ENCODE measurements at regions of chr18 and their contacts with region 1.

Region 1: DNA sequence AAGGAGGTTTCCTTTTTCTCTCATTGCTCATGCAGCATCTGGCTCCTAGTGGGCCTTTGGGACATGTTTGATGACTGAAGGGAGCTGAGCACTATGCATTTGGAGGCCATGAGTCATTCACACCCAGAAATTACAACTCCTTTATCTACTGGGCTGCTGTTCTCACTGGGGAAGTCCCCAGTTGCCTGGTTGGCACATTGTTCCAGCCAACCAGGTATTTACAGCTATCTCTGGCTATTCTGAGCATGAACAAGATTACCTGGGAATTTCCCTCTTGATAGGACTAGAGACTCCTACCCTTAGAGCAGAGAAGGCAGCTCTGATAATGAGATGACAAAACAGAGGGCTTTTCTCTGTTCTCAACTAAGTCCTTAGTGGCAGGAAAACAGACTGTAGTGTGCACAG is 206.5 kb downstream of the SETBP1 start:
- DNase-seq: peak; percentile 76
- H3K4me3 Mint-ChIP-seq: no peak overlapping the region
- H3K27ac Mint-ChIP-seq: peak overlapping the region; percentile 78
- H3K4me1 Mint-ChIP-seq: peaks cover 17% of the 10 kb centered on the region
- H3K27me3 Mint-ChIP-seq: peaks cover 7% of the 10 kb centered on the region

Region 2: DNA sequence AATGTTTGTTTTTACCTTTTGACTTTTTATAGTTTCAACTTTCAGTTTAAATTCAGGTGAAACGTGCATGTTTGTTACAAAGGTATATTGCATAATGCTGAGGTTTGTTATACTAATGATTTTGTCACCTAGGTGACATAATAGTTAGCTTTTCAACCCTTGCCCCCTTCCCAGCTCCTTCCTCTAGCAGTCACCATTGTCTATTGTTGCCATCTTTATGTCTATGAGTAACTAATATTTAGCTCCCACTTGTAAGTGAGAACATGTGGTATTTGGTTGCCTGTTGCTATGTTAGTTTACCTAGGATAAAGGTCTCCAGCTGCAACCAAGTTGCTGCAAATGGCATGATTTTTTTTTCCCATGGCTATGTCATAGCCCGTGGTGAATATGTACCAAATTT is 528.8 kb before region 1 on chr18:
- CTCF ChIA-PET with region 1: no interaction called
- intact Hi-C with region 1: loop called (anchors 5 kb)
- DNase-seq: no peak
- H3K4me3 Mint-ChIP-seq: no peak overlapping the region
- H3K27ac Mint-ChIP-seq: no peak overlapping the region
- H3K4me1 Mint-ChIP-seq: no peaks in the 10 kb centered on the region
- H3K27me3 Mint-ChIP-seq: no peaks in the 10 kb centered on the region

Region 3: GRCh38 chr18:44679056-44679905 is 207.9 kb before region 1 on chr18:
- CTCF ChIA-PET with region 1: interaction called, 4 read pairs
- intact Hi-C with region 1: loop called (anchors 1 kb)
- DNase-seq: peak; percentile 83
- H3K4me3 Mint-ChIP-seq: peak overlapping the region; percentile 52
- H3K27ac Mint-ChIP-seq: no peak overlapping the region
- H3K4me1 Mint-ChIP-seq: peaks cover 7% of the 10 kb centered on the region
- H3K27me3 Mint-ChIP-seq: peaks cover 22% of the 10 kb centered on the region

Region 4: DNA sequence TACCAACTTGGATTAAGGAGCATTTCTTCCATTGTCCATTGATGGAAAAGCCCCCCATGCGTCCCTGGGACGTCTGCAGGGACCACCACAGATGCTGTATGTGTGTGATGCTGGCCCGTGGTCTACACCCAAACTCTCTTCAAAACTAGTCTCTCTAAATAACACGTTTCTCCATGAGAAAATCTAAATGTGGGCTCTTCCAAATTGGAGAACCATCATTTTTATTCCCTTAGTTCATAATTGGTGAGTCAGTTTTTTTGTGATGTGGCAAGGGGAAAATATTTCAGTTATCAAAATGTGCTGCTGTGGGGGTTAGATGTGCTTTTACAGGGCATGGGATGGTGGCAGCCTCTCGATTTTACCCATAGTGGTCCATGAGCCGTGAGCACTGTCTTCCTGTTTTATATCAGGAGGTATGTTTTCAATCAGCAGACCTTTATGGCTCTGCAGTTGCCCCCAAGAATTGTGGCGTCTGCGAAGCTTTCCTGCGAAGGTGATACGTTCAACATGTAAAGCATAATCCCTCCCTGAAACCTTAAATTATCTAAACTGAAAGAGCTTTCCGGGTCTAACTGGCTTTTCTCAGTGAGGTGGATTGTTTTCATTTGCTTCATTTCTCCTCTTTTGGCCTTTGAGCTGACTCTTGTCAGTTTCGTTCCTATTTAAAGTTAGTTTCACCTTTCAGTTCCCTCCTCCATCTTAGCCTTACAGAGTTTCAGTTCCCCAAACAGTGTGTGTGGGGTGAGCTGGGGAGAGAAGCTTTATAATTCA is 128.2 kb before region 1 on chr18:
- CTCF ChIA-PET with region 1: interaction called, 9 read pairs
- intact Hi-C with region 1: loop called (anchors 1 kb)
- DNase-seq: peak; percentile 76
- H3K4me3 Mint-ChIP-seq: no peak overlapping the region
- H3K27ac Mint-ChIP-seq: peak overlapping the region; percentile 80
- H3K4me1 Mint-ChIP-seq: peaks cover 27% of the 10 kb centered on the region
- H3K27me3 Mint-ChIP-seq: peaks cover 6% of the 10 kb centered on the region

Region 5: GRCh38 chr18:44819944-44820510 is 67.2 kb before region 1 on chr18:
- CTCF ChIA-PET with region 1: no interaction called
- intact Hi-C with region 1: loop called (anchors 1 kb)
- DNase-seq: no peak
- H3K4me3 Mint-ChIP-seq: no peak overlapping the region
- H3K27ac Mint-ChIP-seq: no peak overlapping the region
- H3K4me1 Mint-ChIP-seq: peaks cover 12% of the 10 kb centered on the region
- H3K27me3 Mint-ChIP-seq: peaks cover 16% of the 10 kb centered on the region

Region 6: DNA sequence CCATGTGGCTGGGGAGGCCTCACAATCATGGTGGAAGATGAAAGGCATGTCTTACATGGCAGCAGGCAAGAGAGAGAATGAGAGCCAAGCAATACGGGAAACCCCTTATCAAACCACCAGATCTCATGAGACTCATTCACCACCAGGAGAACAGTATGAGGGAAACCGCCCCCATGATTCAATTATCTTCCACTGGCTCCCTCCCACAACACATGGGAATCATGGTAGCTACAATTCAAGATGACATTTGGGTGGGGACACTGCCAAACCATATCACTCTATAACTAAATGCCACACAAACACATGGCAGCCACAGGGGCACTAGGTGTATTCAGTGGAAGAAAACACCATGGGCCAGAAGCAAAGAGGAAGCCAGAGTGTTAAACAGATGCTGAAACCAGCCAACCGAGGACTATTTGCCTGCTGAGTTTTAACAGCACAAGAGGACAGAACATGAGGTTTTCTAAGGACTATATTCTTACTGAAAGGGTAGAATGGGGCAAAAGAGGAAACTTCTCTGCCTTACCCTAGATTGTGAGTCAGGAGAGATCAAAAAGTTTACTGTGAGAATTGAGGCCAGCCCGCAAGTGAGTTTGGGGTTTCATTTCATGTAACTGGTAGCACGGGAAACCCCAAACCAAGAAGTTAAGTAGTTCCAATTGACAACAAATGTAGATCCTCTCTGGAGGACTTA is 987.4 kb after region 1 on chr18:
- CTCF ChIA-PET with region 1: no interaction called
- intact Hi-C with region 1: loop called (anchors 5 kb)
- DNase-seq: peak; percentile 88
- H3K4me3 Mint-ChIP-seq: peak overlapping the region; percentile 1
- H3K27ac Mint-ChIP-seq: peak overlapping the region; percentile 95
- H3K4me1 Mint-ChIP-seq: peaks cover 31% of the 10 kb centered on the region
- H3K27me3 Mint-ChIP-seq: no peaks in the 10 kb centered on the region

Measured in activated naive CD4-positive, alpha-beta T cell treated with anti-CD3 and anti-CD28 coated beads for 36 hours (primary cell).